Activated B cell treated with CpG ODN at 0.5 μM for 24 hours (primary cell): ENCODE measurements at regions of chr17 and their contacts with region 1.

Region 1: DNA sequence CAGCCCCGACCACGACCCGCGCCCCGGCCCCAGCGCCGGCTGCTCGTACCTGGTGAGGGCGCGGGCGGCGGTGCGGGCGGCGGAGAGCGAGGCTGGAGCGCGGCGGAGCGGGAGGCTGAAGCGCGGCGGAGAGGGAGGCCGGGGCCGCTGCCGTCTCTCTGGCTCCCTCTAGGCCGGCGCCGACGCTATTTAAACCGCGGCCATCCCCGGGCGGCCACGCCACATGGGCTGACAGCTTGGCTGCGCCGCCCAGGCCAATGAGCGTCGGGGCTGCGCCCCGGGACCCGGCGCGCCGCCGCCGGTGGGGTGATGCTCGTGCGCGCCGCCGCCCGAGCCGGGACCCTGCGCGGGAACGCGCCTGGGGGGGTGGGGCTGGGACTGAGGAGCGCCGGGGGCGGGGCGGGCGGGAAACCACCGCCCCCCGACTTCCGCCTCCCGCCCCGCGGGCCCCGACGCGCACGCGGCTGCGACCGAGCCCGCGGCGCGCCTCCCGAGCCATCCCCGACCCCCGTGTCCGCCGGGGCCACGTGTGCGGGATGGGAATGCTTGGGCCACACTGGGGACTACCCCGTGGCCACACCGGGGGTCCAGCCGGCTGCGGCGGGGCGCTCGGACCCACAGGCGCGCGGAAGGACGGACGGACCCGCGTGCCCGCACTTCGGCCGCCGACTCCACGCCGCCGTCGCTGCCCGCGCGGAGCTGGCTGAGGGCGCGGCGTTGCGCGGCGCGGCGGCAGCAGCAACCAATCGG is at the start of gene FASN:
- DNase-seq: peak; percentile 90
- ATAC-seq: peak; percentile 78
- H3K4me3 Mint-ChIP-seq: peak within 1 kb of the TSS; percentile 73
- H3K27ac Mint-ChIP-seq: no peak within 1 kb of the TSS
- H3K4me1 Mint-ChIP-seq: peaks cover 16% of the 10 kb centered on the region
- H3K27me3 Mint-ChIP-seq: no peaks in the 10 kb centered on the region
- CTCF ChIP-seq: no peak
- total RNA-seq, gene FASN: 104 and 121 TPM in 2 replicates

Region 2: DNA sequence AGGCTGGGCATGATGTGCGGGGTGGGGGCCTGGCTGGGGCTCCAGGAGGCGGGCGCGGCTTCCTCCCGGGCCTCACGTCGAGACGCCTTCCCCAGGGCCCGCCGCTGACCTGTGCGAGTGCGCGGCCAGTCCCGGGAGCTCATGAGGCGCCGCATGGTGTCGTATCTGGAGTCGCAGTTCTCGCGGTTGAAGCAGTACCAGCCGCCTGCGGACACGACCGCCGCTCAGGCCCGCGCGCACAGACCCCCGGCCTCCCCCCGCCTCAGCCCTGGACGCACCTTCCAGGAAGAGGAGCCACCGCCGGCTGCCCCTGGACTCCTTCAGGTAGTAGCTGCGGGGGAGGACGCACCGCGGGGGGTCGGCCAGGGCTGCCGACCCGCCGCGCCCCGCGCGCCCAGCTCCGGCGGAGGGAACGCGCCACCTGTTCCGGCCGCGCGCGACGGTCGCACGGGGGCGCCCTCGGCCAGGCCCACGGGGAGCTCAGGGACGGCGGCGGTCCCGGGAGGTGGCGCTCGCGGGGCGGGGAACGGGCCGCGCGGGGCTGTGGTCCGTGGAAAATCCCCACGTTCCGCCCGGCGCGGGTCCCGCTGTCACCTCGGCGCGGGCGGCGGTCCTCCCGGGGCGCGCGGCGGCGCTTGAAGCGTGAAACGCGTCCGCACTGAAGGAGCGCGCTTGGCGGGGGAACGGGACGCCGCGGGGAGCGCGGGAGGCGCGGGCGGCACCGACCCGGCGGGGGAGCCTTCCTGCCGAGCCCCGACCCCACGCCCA is 138.7 kb before region 1 on chr17:
- CTCF ChIA-PET with region 1: no interaction called
- POLR2A ChIA-PET with region 1: interaction called, 3 read pairs
- intact Hi-C with region 1: loop called (anchors 5 kb)
- DNase-seq: peak; percentile 90
- ATAC-seq: peak; percentile 95
- H3K4me3 Mint-ChIP-seq: no peak overlapping the region
- H3K27ac Mint-ChIP-seq: no peak overlapping the region
- H3K4me1 Mint-ChIP-seq: peaks cover 4% of the 10 kb centered on the region
- H3K27me3 Mint-ChIP-seq: peaks cover 25% of the 10 kb centered on the region
- CTCF ChIP-seq: peak; percentile 20

Region 3: DNA sequence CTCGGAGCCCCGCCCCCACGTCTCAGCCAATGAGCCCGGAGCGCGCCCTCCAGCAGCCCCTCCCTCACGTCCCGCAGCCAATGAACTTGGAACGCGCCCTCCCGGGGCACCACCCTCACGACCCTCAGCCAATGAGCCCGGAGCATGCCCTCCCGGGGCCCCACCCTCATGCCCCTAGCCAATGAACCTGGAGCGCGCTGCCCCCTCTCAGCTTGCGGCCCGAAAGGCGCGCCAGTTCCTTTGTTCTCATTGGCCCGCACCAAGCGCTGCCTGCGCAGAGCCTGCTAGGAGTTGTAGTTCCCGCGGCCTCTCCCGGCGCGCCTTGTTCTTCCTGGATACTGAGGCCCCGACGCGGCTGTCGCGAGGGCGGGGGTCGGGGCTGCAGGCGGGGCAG is 75.3 kb before region 1 on chr17 and contains the start of gene LRRC45:
- CTCF ChIA-PET with region 1: no interaction called
- POLR2A ChIA-PET with region 1: interaction called, 4 read pairs
- intact Hi-C with region 1: loop called (anchors 1 kb)
- DNase-seq: peak; percentile 97
- ATAC-seq: peak; percentile 96
- H3K4me3 Mint-ChIP-seq: peak within 1 kb of the TSS; percentile 85
- H3K27ac Mint-ChIP-seq: no peak within 1 kb of the TSS
- H3K4me1 Mint-ChIP-seq: peaks cover 22% of the 10 kb centered on the region
- H3K27me3 Mint-ChIP-seq: no peaks in the 10 kb centered on the region
- CTCF ChIP-seq: no peak
- total RNA-seq, gene LRRC45: 10.6 and 10.8 TPM in 2 replicates

Region 4: GRCh38 chr17:82065638-82066303 is 32.5 kb before region 1 on chr17 and contains the start of gene DUS1L:
- CTCF ChIA-PET with region 1: no interaction called
- POLR2A ChIA-PET with region 1: interaction called, 9 read pairs
- intact Hi-C with region 1: loop called (anchors 1 kb)
- DNase-seq: peak; percentile 79
- ATAC-seq: peak; percentile 89
- H3K4me3 Mint-ChIP-seq: peak within 1 kb of the TSS; percentile 84
- H3K27ac Mint-ChIP-seq: peak within 1 kb of the TSS; percentile 78
- H3K4me1 Mint-ChIP-seq: peaks cover 15% of the 10 kb centered on the region
- H3K27me3 Mint-ChIP-seq: no peaks in the 10 kb centered on the region
- CTCF ChIP-seq: no peak
- total RNA-seq, gene DUS1L: 127 and 134 TPM in 2 replicates

Region 5: GRCh38 chr17:82236142-82236981 is 138.1 kb after region 1 on chr17:
- CTCF ChIA-PET with region 1: no interaction called
- POLR2A ChIA-PET with region 1: no interaction called
- intact Hi-C with region 1: no loop called
- DNase-seq: peak; percentile 58
- ATAC-seq: peak; percentile 64
- H3K4me3 Mint-ChIP-seq: no peak overlapping the region
- H3K27ac Mint-ChIP-seq: no peak overlapping the region
- H3K4me1 Mint-ChIP-seq: peaks cover 53% of the 10 kb centered on the region
- H3K27me3 Mint-ChIP-seq: no peaks in the 10 kb centered on the region
- CTCF ChIP-seq: no peak